ENCODE measurements at regions of chr4 and their contacts with region 1.

Region 1: DNA sequence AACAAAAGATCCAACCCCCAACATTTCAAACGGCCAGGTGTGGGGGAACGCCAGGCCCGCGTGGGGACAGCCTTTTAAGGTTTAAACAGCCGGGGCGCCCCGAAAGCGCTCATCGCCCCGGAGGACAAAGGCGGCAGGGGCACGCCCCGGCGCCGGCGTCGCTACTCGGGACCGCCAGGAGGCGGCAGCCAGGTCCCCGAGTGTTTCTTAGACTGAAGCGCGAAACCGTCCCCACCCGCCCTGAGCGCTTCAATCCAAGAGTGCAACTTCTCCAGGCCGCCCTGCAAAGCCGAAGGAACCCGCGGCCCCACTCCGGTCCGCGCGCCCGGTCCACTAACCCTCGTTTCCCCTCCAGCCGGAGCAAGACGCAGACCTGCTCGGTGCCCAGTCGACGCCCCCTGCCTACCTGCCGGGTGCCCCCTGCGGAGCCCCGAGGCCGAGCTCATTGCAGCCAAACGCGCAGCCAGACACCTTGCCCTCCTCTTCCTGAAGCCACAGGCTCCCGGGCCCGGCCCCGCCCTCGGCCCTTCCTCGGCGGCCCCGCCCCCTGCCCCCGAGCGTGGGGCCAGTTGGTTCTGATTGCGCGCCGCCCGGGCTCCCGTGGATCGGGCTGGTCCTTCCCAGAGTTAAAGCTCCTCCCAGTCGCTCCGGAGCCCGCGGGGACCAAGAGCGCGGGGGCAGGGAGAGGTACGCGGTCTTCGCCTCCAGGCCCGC is at the start of gene CASP6:
- DNase-seq: peak; percentile 89
- ATAC-seq: peak; percentile 96 to 98
- total RNA-seq, gene CASP6: 7.6 to 15.8 TPM

Region 2: GRCh38 chr4:109815151-109816081 is 112.3 kb after region 1 on chr4 and contains the start of gene GAR1:
- intact Hi-C with region 1: loop called in 1 of 2 experiments (anchors 10 kb)
- DNase-seq: peak; percentile 93
- ATAC-seq: peak; percentile 99 to 100
- total RNA-seq, gene GAR1: 9.6 to 12.0 TPM